MCF 10A (cell line): ENCODE measurements at regions of chr7 and their contacts with region 1.

Region 1: GRCh38 chr7:23357190-23358093 is 58.3 kb downstream of the MALSU1 start:
- DNase-seq: peak; percentile 74
- H3K4me3 Mint-ChIP-seq: peak overlapping the region; percentile 41
- H3K27ac Mint-ChIP-seq: peak overlapping the region; percentile 35
- H3K4me1 Mint-ChIP-seq: peaks cover 14% of the 10 kb centered on the region
- H3K27me3 Mint-ChIP-seq: no peaks in the 10 kb centered on the region
- CTCF ChIP-seq: peak; percentile 52

Region 2: DNA sequence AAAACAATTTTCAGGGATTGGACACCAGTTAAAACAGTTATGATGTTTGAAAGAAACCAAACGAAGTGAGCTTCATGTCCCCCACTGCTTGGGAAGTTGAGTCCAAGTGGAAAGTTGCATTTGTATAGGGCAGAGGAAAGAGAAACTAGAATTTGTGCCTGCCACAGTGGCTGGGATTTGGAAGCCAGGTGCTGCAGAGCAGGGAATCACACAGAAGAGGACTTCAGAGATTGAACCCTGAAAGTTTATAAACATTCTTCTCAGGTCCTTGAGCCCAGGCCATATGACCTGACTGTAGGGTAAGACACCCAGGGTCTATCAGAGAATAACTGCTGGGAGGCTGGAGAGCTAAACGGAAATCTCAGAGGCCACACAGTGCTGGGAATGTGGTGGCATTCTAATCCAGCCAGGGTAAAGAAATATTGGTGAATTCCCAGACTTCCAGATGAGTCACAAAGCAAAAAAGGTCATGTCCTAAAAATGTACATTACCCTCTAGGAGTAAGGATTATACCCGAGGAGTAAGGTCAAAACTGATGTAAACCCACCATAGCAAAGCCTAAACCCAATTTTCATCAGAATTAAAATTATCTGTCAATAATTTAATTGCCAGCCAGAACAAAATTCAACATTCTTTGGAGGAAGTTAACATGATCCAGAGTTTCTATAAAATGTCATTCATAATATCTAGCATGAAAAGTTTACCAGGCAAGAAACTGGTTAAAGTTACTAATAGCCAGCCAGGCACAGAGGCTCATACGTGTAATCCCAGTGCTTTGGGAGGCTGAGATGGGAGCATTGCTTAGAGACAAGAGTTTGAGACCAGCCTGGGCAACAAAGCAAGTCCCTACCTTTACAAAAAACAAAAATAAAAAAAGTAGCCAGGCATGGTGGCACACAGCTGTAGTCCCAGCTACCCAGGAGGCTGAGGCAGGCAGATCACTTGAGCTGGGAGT is 566.0 kb before region 1 on chr7:
- CTCF ChIA-PET with region 1: no interaction called
- POLR2A ChIA-PET with region 1: no interaction called
- intact Hi-C with region 1: no loop called
- DNase-seq: peak; percentile 18
- H3K4me3 Mint-ChIP-seq: no peak overlapping the region
- H3K27ac Mint-ChIP-seq: no peak overlapping the region
- H3K4me1 Mint-ChIP-seq: no peaks in the 10 kb centered on the region
- H3K27me3 Mint-ChIP-seq: no peaks in the 10 kb centered on the region
- CTCF ChIP-seq: no peak

Region 3: GRCh38 chr7:23246555-23246954 is 110.9 kb before region 1 on chr7 and contains the start of gene GPNMB:
- CTCF ChIA-PET with region 1: no interaction called
- POLR2A ChIA-PET with region 1: no interaction called
- intact Hi-C with region 1: no loop called
- DNase-seq: peak; percentile 63
- H3K4me3 Mint-ChIP-seq: peak within 1 kb of the TSS; percentile 63
- H3K27ac Mint-ChIP-seq: no peak within 1 kb of the TSS
- H3K4me1 Mint-ChIP-seq: peaks cover 13% of the 10 kb centered on the region
- H3K27me3 Mint-ChIP-seq: no peaks in the 10 kb centered on the region
- CTCF ChIP-seq: no peak
- total RNA-seq, gene GPNMB: 1.1 and 1.6 TPM in 2 replicates

Region 4: DNA sequence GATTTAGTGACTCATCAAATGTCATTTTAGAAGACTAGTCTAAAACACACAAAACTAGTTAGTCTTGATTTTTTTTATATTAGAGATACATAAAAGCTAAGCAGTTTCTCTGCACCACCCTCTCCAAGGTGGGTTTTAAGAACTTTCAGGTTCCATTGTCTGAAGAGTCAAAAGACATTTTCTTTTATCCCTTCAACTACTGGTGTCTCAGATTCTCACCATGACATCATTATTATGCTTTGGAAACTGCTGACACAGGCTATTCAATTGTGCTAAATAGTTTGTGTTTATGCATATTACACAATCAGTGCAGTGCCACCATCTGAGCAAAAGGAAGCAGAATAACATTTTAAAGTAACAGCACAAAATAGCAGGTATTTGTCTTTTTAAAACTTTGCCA is 60.6 kb after region 1 on chr7:
- CTCF ChIA-PET with region 1: interaction called, 10 read pairs
- POLR2A ChIA-PET with region 1: interaction called, 3 read pairs
- intact Hi-C with region 1: no loop called
- DNase-seq: peak; percentile 59
- H3K4me3 Mint-ChIP-seq: no peak overlapping the region
- H3K27ac Mint-ChIP-seq: peak overlapping the region; percentile 64
- H3K4me1 Mint-ChIP-seq: peaks cover 9% of the 10 kb centered on the region
- H3K27me3 Mint-ChIP-seq: no peaks in the 10 kb centered on the region
- CTCF ChIP-seq: no peak

Region 5: GRCh38 chr7:23462846-23463245 is 105.4 kb after region 1 on chr7:
- CTCF ChIA-PET with region 1: interaction called, 9 read pairs
- POLR2A ChIA-PET with region 1: interaction called, 3 read pairs
- intact Hi-C with region 1: loop called (anchors 1 kb)
- DNase-seq: peak; percentile 20
- H3K4me3 Mint-ChIP-seq: no peak overlapping the region
- H3K27ac Mint-ChIP-seq: no peak overlapping the region
- H3K4me1 Mint-ChIP-seq: peaks cover 19% of the 10 kb centered on the region
- H3K27me3 Mint-ChIP-seq: peaks cover 13% of the 10 kb centered on the region
- CTCF ChIP-seq: no peak

Region 6: DNA sequence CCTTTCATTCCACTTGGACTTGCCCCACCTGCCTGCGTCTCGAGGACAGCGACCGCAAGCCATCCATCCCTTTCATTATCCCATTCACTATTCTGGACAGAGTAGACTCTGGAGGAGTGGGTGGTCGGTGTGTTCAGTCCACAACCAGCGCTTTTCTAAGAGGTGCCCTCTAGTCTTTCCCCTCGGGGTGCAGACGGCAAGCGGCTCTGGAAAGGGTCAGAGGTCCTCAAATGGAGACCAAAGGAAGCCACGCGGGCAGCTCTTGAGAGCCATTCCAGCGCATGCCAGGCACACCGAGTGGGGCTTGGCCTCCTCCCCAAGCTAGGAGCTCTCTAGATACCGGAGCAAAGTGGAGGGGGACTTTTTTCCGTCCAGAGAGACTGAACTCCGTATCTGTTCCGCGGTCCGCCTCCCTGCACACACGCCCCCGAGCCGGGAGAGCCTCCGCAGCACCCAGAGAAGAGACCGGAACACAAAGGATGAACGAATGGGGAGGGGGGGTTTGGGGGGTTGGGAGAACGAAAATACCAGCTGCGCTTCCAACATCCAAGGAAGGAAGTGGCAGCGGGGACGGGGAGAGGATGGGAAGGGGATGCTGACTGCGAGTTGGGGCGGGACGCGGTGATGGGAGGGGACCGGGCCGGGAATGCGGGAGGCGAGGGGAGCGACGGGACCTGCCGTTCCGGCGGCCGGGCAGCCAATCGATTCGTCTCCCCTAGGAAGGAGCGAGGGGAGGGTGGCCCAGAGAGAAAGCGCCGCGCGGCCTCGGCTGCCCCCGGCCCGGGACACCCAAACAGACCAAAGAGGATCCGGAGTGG is 1399.3 kb after region 1 on chr7:
- CTCF ChIA-PET with region 1: no interaction called
- POLR2A ChIA-PET with region 1: no interaction called
- intact Hi-C with region 1: no loop called
- DNase-seq: peak; percentile 71
- H3K4me3 Mint-ChIP-seq: peak overlapping the region; percentile 90
- H3K27ac Mint-ChIP-seq: peak overlapping the region; percentile 92
- H3K4me1 Mint-ChIP-seq: peaks cover 23% of the 10 kb centered on the region
- H3K27me3 Mint-ChIP-seq: no peaks in the 10 kb centered on the region
- CTCF ChIP-seq: no peak